HepG2 (cell line): ENCODE measurements at regions of chr6 and their contacts with region 1.

Region 1: DNA sequence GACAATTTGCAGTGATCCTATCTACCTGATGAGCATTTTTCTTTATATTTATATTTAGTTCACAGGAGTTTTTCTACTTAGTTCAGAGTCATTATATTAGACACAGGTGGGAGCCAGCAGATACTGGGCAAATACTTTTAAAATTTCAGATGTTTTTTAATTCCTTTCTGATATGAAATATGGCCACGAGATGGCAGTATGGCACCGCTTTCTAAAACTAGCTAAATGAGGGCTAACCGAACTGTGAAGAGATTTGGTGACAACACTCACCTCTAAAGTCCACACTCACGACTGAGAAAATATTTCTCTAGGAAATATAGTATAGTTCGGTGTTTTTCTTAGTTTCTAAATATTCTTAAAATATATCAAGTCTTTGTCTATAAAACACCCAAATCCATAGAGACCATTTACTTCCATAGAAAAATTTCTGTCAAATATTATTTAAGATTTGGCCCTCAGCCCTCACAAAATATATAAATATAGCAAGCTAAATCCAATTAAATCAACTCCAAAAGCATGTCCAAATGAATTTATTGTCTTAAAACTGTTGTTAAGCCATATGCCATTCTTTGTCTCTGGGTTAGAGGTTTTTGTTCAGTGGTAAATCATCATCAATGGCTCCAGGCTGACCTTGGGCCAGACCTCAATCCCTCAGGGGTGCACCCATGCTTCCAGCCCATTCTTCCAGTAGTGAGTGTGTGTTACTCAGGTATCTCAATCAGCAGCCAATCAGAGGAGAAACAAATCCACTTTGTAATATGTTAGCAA is 63.6 kb downstream of the HUS1B start:
- DNase-seq: peak; percentile 56
- ATAC-seq: peak; percentile 66
- H3K4me3 ChIP-seq: no peak overlapping the region
- H3K27ac ChIP-seq: no peak overlapping the region
- H3K4me1 ChIP-seq: no peaks in the 10 kb centered on the region
- H3K27me3 ChIP-seq: no peaks in the 10 kb centered on the region
- CTCF ChIP-seq: peak; percentile 72
- EP300 ChIP-seq: no peak
- POLR2A ChIP-seq: no peak
- RAD21 ChIP-seq: peak; percentile 56; the same call in 1 of the 2 replicates

Region 2: GRCh38 chr6:624979-625378 is 31.7 kb after region 1 on chr6:
- CTCF ChIA-PET with region 1: no interaction called
- POLR2A ChIA-PET with region 1: no interaction called
- in situ Hi-C with region 1: no loop called
- intact Hi-C with region 1: no loop called
- DNase-seq: no peak
- ATAC-seq: peak; percentile 51; the same call in 1 of the 3 replicates
- H3K4me3 ChIP-seq: no peak overlapping the region
- H3K27ac ChIP-seq: no peak overlapping the region
- H3K4me1 ChIP-seq: no peaks in the 10 kb centered on the region
- H3K27me3 ChIP-seq: no peaks in the 10 kb centered on the region
- CTCF ChIP-seq: no peak
- EP300 ChIP-seq: no peak
- POLR2A ChIP-seq: no peak
- RAD21 ChIP-seq: no peak

Region 3: DNA sequence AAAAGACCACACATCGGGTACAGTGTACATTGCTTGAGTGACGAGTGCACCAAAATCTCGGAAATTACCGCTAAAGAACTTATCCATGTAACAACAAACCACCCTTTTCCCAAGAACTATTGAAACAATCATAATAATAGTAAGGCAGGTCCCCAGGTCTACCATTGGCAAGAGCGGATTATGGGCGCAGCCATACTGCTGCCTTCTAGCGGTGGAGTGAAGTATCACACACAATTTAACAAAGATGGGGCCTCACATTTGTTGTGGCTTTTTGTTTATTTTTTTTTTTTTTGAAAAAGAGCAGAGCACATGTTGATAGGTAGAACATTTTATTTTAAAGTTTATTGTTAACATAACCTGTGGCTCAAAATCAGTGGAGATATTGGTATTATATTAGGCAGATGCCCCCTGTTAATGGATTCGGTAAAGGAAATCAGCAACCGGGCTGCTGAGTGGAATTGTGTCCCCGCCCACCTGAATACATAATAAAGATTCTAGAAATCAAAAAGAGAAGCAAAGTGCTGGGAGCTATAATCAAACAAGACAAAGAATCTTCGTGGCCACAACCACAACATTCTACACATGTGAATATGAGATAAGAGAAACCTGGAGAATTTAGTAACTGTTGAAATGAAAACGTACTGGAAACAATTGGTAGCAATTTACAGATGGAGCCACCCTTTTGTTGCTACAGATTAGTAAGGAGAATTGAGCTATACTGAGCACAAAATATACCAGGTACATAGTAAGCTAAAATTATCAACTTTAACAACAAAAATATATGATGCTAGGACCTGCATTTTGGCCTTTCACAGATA is 193.8 kb after region 1 on chr6:
- CTCF ChIA-PET with region 1: interaction called, 22 read pairs
- POLR2A ChIA-PET with region 1: no interaction called
- in situ Hi-C with region 1: no loop called
- intact Hi-C with region 1: loop called (anchors 1 kb)
- DNase-seq: peak; percentile 35
- ATAC-seq: peak; percentile 68
- H3K4me3 ChIP-seq: no peak overlapping the region
- H3K27ac ChIP-seq: no peak overlapping the region
- H3K4me1 ChIP-seq: no peaks in the 10 kb centered on the region
- H3K27me3 ChIP-seq: peaks cover 0 to 26% of the 10 kb centered on the region in 2 experiments; a peak in 3 of 5 replicates
- CTCF ChIP-seq: peak; percentile 76
- EP300 ChIP-seq: no peak
- POLR2A ChIP-seq: no peak
- RAD21 ChIP-seq: peak; percentile 27; the same call in 1 of the 2 replicates

Region 4: DNA sequence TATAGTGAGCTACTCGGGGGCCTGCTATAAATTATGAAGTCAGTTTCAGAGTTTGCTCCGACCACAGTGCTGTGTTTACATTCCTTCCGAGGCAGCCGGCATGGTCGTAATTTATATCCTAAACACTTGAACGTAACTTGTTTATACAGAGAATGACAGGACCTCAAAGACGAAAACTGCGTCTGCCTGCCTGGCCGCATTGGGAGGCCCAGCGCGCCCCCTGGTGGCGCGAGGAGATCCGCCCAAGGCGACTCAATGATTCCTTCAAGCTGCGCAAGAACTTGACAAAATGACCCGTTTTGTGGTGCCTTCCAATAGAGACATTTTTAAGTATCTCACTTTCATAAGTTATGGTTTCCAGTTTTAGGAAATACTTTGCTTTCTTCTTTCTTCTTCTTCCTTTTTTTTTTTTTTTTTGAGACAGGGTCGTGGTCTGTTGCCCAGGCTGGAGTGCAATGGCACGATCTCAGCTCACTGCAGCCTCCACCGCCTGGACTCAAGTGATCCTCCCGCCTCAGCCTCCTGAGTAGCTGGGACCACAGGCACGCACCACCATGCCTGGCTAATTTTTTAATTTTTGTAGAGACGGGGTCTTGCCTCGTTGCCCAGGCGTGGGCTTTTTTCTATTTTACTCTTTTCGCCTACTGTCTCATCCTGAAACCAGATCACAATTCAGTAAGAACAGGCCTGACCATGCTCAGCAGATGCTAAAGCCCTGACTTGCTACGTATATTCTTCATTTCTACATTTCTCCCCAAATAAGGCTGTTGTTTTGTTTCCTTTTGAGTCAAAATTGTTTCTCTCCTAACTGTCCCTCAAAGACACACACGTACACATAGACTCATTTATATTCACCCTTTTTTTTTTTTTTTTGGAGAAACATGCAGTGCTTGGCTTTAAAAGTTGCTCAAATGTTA is 803.9 kb after region 1 on chr6:
- CTCF ChIA-PET with region 1: interaction called, 10 read pairs
- POLR2A ChIA-PET with region 1: no interaction called
- in situ Hi-C with region 1: loop called (anchors 10 kb)
- intact Hi-C with region 1: loop called (anchors 2 kb)
- DNase-seq: peak; percentile 31
- ATAC-seq: peak; percentile 67
- H3K4me3 ChIP-seq: no peak overlapping the region
- H3K27ac ChIP-seq: no peak overlapping the region
- H3K4me1 ChIP-seq: no peaks in the 10 kb centered on the region
- H3K27me3 ChIP-seq: peaks cover 35 to 93% of the 10 kb centered on the region in 2 experiments; a peak in 4 of 5 replicates
- CTCF ChIP-seq: peak; percentile 91
- EP300 ChIP-seq: no peak
- POLR2A ChIP-seq: no peak
- RAD21 ChIP-seq: peak; percentile 79

Region 5: GRCh38 chr6:1436334-1437306 is 843.3 kb after region 1 on chr6:
- CTCF ChIA-PET with region 1: interaction called, 8 read pairs
- POLR2A ChIA-PET with region 1: no interaction called
- in situ Hi-C with region 1: no loop called
- intact Hi-C with region 1: loop called (anchors 1 kb)
- DNase-seq: peak; percentile 67
- ATAC-seq: peak; percentile 98
- H3K4me3 ChIP-seq: no peak overlapping the region
- H3K27ac ChIP-seq: no peak overlapping the region
- H3K4me1 ChIP-seq: no peaks in the 10 kb centered on the region
- H3K27me3 ChIP-seq: peaks cover 10 to 47% of the 10 kb centered on the region in 2 experiments
- CTCF ChIP-seq: peak; percentile 84
- EP300 ChIP-seq: no peak
- POLR2A ChIP-seq: no peak
- RAD21 ChIP-seq: peak; percentile 84